Calu3 (cell line): ENCODE measurements at regions of chr3 and their contacts with region 1.

Region 1: GRCh38 chr3:1056744-1057143 is 36.1 kb upstream of the CNTN6 start:
- DNase-seq: no peak
- H3K4me3 Mint-ChIP-seq: peak overlapping the region; percentile 10
- H3K27ac Mint-ChIP-seq: no peak overlapping the region
- H3K4me1 Mint-ChIP-seq: no peaks in the 10 kb centered on the region
- H3K27me3 Mint-ChIP-seq: no peaks in the 10 kb centered on the region
- CTCF ChIP-seq: no peak

Region 2: DNA sequence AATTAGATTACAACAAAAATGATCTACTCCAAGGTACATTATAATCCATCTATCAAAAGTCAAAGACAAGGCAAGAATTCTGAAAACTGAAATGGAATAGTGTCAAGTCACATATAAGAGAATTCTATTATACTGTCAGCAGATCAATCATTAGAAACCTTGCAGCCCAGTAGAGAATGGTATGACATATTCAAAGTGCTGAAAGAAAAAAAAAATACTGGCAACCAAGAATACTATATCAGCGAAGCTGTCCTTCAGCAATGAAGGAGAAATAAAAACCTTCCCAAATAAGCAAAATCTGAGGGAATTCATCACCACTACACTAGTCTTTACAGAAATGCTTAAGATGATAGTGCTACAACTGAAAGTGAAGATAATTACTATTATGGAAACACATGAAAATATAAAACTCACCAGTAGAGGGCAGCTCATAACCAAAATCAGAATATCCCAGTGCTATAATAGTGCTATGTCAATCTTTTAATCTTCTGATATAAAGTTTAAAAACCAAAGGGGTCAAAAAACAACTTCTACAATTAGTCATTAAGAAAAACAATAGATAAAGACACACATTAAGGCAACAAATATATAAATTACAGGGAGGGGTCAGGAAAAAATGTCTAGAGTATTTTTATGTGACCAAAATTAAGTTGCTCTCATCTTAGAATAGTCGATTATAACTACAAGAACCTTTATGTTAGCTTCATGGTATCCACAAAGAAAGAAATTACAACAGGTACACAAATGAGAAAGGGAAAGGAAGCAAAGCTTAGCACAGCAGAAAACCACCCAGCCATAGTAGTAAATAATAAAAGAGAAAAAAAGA is 154.6 kb before region 1 on chr3:
- CTCF ChIA-PET with region 1: no interaction called
- intact Hi-C with region 1: loop called (anchors 5 kb)
- DNase-seq: no peak
- H3K4me3 Mint-ChIP-seq: no peak overlapping the region
- H3K27ac Mint-ChIP-seq: no peak overlapping the region
- H3K4me1 Mint-ChIP-seq: no peaks in the 10 kb centered on the region
- H3K27me3 Mint-ChIP-seq: no peaks in the 10 kb centered on the region
- CTCF ChIP-seq: peak; percentile 24